ENCODE measurements at regions of chr19 and their contacts with region 1.

Region 1: GRCh38 chr19:13880059-13881043 is 3.4 kb downstream of the NANOS3 start:
- DNase-seq: peak; percentile 92 to 99
- H3K4me3 ChIP-seq: peak overlapping the region; percentile 26 to 53
- H3K27ac ChIP-seq: peak overlapping the region; percentile 58 to 81
- H3K4me1 ChIP-seq: peaks cover 6 to 13% of the 10 kb centered on the region in 2 donors
- H3K27me3 ChIP-seq: no peaks in the 10 kb centered on the region
- CTCF ChIP-seq: peak; percentile 99 to 100 (median 99)

Region 2: GRCh38 chr19:13905938-13906904 is 25.9 kb after region 1 on chr19 and contains the starts of genes BRME1 and CC2D1A:
- intact Hi-C with region 1: loop called (anchors 2 kb)
- DNase-seq: peak; percentile 60 to 94
- H3K4me3 ChIP-seq: peak within 1 kb of the TSS; percentile 70 to 96
- H3K27ac ChIP-seq: peak within 1 kb of the TSS; percentile 9 to 60
- H3K4me1 ChIP-seq: peaks cover 4 to 13% of the 10 kb centered on the region in 2 donors
- H3K27me3 ChIP-seq: no peaks in the 10 kb centered on the region
- CTCF ChIP-seq: no peak
- total RNA-seq, gene BRME1: not detected
- total RNA-seq, gene CC2D1A: 128 TPM

Region 3: GRCh38 chr19:13952154-13953035 is 72.0 kb after region 1 on chr19 and contains the start of gene DCAF15:
- intact Hi-C with region 1: loop called (anchors 2 kb)
- DNase-seq: peak; percentile 99 to 100
- H3K4me3 ChIP-seq: peak within 1 kb of the TSS; percentile 79 to 81
- H3K27ac ChIP-seq: peak within 1 kb of the TSS; percentile 76 to 77
- H3K4me1 ChIP-seq: peaks cover 6 to 12% of the 10 kb centered on the region in 2 donors
- H3K27me3 ChIP-seq: no peaks in the 10 kb centered on the region
- CTCF ChIP-seq: no peak
- total RNA-seq, gene DCAF15: 35.0 TPM

Region 4: DNA sequence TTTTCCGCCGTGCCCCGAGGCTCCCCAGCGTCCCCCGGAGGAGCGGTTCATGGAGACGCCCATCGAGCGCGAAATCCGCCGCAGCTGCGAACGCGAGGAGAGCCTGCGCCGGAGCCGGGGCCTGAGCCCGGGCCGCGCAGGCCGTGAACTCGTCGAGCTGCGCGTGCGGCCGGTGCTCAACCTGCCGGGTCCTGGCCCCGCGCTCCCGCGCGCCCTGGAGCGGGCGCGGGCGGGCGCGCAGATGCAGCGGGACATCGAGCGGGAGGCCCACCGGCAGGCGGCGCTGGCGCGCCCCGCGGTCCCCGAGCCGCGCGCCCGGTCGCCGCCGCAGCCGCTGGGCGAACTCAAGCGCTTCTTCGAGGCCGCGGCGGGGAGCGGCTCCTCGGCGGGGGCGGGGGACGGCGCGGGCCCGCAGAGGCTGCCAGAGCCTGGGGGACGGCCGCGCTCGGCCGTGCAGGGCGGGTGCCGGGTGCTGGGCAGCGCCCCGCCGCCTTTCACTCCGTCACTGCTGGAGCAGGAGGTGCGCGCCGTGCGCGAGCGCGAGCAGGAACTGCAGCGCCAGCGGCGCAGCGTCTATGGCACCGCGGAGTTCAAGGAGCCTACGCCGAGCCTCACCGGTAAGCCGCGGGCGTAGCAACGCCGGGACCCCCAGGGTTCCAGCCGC is 193.0 kb after region 1 on chr19:
- intact Hi-C with region 1: loop called (anchors 1 kb)
- DNase-seq: peak in 1 of 2 donors; percentile 83
- H3K4me3 ChIP-seq: peak overlapping the region; percentile 62 to 73
- H3K27ac ChIP-seq: peak overlapping the region; percentile 90 to 94
- H3K4me1 ChIP-seq: peaks cover 0 to 12% of the 10 kb centered on the region in 2 donors
- H3K27me3 ChIP-seq: no peaks in the 10 kb centered on the region
- CTCF ChIP-seq: peak in 1 of 3 experiments; percentile 97

Region 5: DNA sequence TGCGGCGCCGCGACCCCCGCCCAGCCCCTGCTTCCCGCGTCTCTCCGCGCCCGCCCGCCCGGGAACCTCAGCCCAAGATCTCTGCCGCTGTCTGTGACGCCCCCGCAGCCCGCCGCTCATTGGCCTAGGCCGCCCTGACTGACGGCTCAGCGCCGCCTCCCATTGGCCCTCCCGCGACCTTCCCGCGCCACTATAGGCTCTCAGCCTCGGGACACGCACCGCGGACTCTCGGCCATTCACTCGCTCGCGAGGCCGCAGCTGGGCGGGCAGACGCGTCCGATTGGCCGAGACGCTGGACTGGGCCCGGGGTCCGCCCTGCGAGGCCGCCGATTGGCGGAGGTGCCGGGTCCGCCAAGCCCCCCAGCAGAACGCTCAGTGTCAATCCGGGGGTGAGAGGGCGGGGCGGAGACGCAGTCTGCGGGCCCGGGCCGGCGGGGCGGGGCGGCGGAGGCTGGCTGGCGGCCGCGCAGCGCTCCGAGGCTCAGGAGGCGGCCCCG is 237.4 kb after region 1 on chr19 and contains the start of gene PRKACA:
- intact Hi-C with region 1: loop called (anchors 1 kb)
- DNase-seq: peak; percentile 97 to 99
- H3K4me3 ChIP-seq: peak within 1 kb of the TSS; percentile 71 to 96
- H3K27ac ChIP-seq: peak within 1 kb of the TSS; percentile 92 to 99
- H3K4me1 ChIP-seq: peaks cover 23 to 51% of the 10 kb centered on the region in 2 donors
- H3K27me3 ChIP-seq: no peaks in the 10 kb centered on the region
- CTCF ChIP-seq: no peak
- total RNA-seq, gene PRKACA: 92.6 TPM

Region 6: DNA sequence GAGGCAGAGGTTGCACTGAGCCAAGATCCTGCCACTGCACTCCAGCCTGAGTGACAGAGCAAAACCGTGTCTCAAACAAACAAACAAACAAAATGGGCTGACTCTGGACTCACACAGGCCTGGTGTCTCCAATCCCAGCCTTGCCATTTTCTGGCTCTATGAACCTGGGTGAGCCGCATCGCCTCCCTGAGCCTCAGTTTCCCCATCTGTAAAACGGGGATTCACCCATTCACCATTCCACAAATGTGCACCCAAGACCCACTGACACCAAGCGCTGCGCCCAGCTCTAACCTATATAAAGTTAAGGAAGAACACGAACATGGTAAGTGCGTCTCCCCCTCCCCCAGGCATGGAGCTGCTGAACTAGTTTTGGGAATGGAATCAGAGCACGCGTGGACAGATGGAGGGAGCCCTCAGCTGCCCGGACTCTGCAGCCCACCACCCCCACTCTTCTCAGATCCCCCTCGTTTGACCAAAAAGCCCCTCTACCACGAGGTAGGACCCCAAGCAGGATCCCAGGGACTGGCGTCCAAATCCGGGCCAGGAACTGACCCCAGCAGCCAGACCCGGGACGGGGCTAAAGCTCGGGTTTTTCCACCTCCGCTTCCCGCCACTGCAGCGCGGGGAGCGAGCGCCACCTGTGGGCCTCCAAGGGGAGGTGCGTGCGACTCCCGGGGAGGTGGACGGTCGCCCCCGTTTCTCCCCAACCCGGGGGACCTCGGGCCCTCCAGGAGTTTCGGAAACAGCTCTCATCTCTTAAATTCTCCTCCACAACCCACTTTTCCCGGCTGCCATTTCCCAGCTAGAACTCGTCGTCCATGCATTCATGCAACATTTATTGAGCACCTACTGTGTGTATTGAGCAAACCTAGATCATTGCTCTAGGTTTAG is 467.9 kb after region 1 on chr19:
- intact Hi-C with region 1: loop called (anchors 1 kb)
- DNase-seq: peak in 1 of 2 donors; percentile 77
- H3K4me3 ChIP-seq: peak overlapping the region; percentile 29 to 45
- H3K27ac ChIP-seq: no peak overlapping the region
- H3K4me1 ChIP-seq: no peaks in the 10 kb centered on the region
- H3K27me3 ChIP-seq: no peaks in the 10 kb centered on the region
- CTCF ChIP-seq: peak; percentile 89 to 99 (median 98)